ENCODE measurements at regions of chr12 and their contacts with region 1.

Region 1: GRCh38 chr12:132614861-132615578 is 3.6 kb upstream of the P2RX2 start:
- DNase-seq: peak; percentile 84
- H3K4me3 ChIP-seq: no peak overlapping the region
- H3K27ac ChIP-seq: no peak overlapping the region
- H3K4me1 ChIP-seq: peaks cover 9% of the 10 kb centered on the region
- CTCF ChIP-seq: peak; percentile 96

Region 2: DNA sequence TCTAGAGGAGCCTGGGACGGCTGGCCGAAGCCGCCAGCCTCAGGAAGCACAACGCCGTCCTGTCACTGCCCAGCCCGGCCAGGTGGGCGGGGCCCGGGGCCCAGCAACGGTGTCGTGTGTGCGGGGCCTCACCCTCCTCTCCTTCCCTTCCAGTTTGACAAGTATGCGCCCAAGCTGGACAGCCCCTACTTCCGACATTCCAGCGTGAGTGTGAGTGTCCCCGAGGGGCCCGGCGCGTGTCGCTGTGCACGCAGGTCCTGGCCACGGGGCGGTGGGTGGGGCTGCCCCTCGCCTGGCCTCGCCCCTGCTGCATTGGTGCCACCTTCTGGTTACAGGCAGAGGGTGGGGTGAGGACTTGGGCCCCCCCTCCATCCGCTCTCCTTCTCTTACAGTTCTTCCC is 42.9 kb before region 1 on chr12:
- CTCF ChIA-PET with region 1: no interaction called
- POLR2A ChIA-PET with region 1: no interaction called
- intact Hi-C with region 1: no loop called
- DNase-seq: no peak
- H3K4me3 ChIP-seq: no peak overlapping the region
- H3K27ac ChIP-seq: no peak overlapping the region
- H3K4me1 ChIP-seq: no peaks in the 10 kb centered on the region
- CTCF ChIP-seq: no peak

Region 3: GRCh38 chr12:132600048-132601032 is 14.7 kb before region 1 on chr12:
- CTCF ChIA-PET with region 1: no interaction called
- POLR2A ChIA-PET with region 1: no interaction called
- intact Hi-C with region 1: loop called (anchors 1 kb)
- DNase-seq: peak; percentile 16
- H3K4me3 ChIP-seq: no peak overlapping the region
- H3K27ac ChIP-seq: no peak overlapping the region
- H3K4me1 ChIP-seq: peaks cover 3% of the 10 kb centered on the region
- CTCF ChIP-seq: peak; percentile 65

Region 4: DNA sequence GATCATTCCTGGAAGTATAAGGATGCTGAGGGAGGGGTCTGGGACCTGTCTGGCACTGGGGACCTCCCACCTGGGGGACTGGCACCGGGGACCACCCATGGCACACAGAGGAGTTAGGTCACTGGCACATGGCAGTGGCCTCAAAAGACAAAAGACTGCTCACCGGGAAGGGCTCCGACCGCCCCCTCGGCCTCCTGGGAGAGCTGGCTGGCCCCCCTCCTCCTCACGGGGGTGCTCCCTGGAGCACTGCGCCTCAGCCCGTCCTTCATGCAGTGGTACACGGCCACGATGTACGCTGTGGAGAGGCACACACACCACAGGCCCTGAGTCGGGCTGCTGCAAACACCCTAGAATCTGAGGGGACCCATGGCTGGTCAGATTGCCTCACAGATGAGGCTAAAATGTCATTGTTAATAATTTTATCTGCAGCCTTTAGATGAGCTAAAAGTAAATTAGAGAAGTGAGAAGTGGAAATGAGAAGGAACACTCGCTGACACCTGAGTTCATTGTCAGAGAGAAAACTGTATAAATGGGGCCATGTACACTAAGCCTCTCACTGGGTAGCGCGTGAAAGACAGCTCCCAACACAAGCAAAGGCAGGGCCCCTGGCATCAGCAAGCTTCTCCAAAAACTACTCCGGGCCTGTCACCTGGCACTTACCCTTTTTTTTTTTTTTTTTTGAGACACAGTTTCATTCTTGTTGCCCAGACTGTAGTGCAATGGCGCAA is 17.6 kb after region 1 on chr12:
- CTCF ChIA-PET with region 1: interaction called, 3 read pairs
- POLR2A ChIA-PET with region 1: interaction called, 4 read pairs
- intact Hi-C with region 1: loop called (anchors 2 kb)
- DNase-seq: peak; percentile 89
- H3K4me3 ChIP-seq: peak overlapping the region; percentile 20
- H3K27ac ChIP-seq: peak overlapping the region; percentile 100
- H3K4me1 ChIP-seq: peaks cover 62% of the 10 kb centered on the region
- CTCF ChIP-seq: no peak